Ovary (tissue), 10 donors: ENCODE measurements at regions of chr5 and their contacts with region 1.

Region 1: GRCh38 chr5:177113566-177114424 is 19.8 kb upstream of the NSD1 start:
- DNase-seq: peak; percentile 60 to 88 (median 83)
- H3K4me3 ChIP-seq: no peak overlapping the region
- H3K27ac ChIP-seq: no peak overlapping the region
- H3K4me1 ChIP-seq: peaks cover 18% of the 10 kb centered on the region
- H3K27me3 ChIP-seq: no peaks in the 10 kb centered on the region
- CTCF ChIP-seq: peak; percentile 88 to 94 (median 90)
- EP300 ChIP-seq: no peak
- POLR2A ChIP-seq: no peak

Region 2: DNA sequence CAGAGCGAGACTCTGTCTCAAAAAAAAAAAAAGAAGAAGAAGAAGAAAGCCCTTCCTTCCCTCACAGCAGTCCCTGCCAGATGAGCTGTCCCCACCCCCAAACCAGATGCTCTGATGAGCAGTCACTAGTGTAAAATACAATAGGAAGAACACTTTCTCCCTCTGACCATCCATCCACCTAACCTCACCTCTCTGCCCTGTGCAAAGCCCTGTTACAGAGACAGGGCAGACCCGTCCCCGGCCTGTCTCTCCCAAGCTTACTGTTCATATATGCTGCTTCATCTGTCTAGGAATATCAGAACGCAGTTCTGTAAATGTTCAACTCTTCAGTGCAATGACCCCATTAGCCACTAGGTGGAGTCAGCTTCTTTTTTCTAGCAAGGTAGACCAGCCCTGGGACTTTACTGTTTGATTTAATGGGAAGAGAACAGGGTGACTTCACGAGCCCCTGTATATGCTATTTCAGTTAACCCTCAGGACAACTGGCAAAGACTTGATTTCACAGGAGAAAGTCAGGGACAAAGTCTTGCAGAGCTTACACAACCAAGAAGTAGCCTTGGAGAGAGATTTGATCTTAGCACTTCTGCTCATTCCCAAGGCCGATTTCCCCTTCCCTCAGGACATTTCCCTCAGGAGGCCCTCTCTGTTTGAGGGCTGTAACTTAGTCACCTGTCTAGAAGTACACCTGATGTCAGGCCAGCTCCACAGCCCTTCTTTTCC is 42.0 kb before region 1 on chr5:
- intact Hi-C with region 1: loop called in 3 of 4 experiments (anchors 2 to 5 kb)
- DNase-seq: peak in 4 of 5 donors; percentile 57 to 87 (median 74)
- H3K4me3 ChIP-seq: no peak overlapping the region
- H3K27ac ChIP-seq: no peak overlapping the region
- H3K4me1 ChIP-seq: no peaks in the 10 kb centered on the region
- H3K27me3 ChIP-seq: no peaks in the 10 kb centered on the region
- CTCF ChIP-seq: peak; percentile 83 to 91 (median 88)
- EP300 ChIP-seq: no peak
- POLR2A ChIP-seq: no peak

Region 3: GRCh38 chr5:177362610-177363507 is 249.1 kb after region 1 on chr5:
- intact Hi-C with region 1: loop called in 1 of 4 experiments (anchors 10 kb)
- DNase-seq: peak; percentile 61 to 78 (median 65)
- H3K4me3 ChIP-seq: peak overlapping the region; percentile 40
- H3K27ac ChIP-seq: no peak overlapping the region
- H3K4me1 ChIP-seq: peaks cover 8% of the 10 kb centered on the region
- H3K27me3 ChIP-seq: no peaks in the 10 kb centered on the region
- CTCF ChIP-seq: no peak
- EP300 ChIP-seq: no peak
- POLR2A ChIP-seq: no peak

Region 4: GRCh38 chr5:177399997-177400868 is 286.4 kb after region 1 on chr5 and contains the start of gene PFN3:
- intact Hi-C with region 1: no loop called
- DNase-seq: peak in 3 of 5 donors; percentile 35 to 64 (median 55)
- H3K4me3 ChIP-seq: no peak within 1 kb of the TSS
- H3K27ac ChIP-seq: no peak within 1 kb of the TSS
- H3K4me1 ChIP-seq: peaks cover 9% of the 10 kb centered on the region
- H3K27me3 ChIP-seq: peaks cover 9% of the 10 kb centered on the region
- CTCF ChIP-seq: no peak
- EP300 ChIP-seq: no peak
- POLR2A ChIP-seq: no peak
- total RNA-seq, gene PFN3: not detected

Region 5: GRCh38 chr5:177454397-177455035 is 340.7 kb after region 1 on chr5:
- intact Hi-C with region 1: loop called in 1 of 4 experiments (anchors 10 kb)
- DNase-seq: peak; percentile 88 to 96 (median 94)
- H3K4me3 ChIP-seq: peak overlapping the region; percentile 44
- H3K27ac ChIP-seq: peak overlapping the region; percentile 26 to 49
- H3K4me1 ChIP-seq: peaks cover 7% of the 10 kb centered on the region
- H3K27me3 ChIP-seq: no peaks in the 10 kb centered on the region
- CTCF ChIP-seq: peak; percentile 91 to 98 (median 96)
- EP300 ChIP-seq: no peak
- POLR2A ChIP-seq: peak; percentile 39

Region 6: GRCh38 chr5:177473461-177474001 is 359.7 kb after region 1 on chr5 and contains the start of gene DBN1:
- intact Hi-C with region 1: no loop called
- DNase-seq: peak; percentile 53 to 76 (median 68)
- H3K4me3 ChIP-seq: peak within 1 kb of the TSS; percentile 80
- H3K27ac ChIP-seq: peak within 1 kb of the TSS; percentile 61 to 69
- H3K4me1 ChIP-seq: peaks cover 21% of the 10 kb centered on the region
- H3K27me3 ChIP-seq: no peaks in the 10 kb centered on the region
- CTCF ChIP-seq: no peak
- EP300 ChIP-seq: no peak
- POLR2A ChIP-seq: no peak
- total RNA-seq, gene DBN1: 35.1 to 91.6 (median 57.0) TPM